HepG2 (cell line): ENCODE measurements at regions of chr4 and their contacts with region 1.

Region 1: DNA sequence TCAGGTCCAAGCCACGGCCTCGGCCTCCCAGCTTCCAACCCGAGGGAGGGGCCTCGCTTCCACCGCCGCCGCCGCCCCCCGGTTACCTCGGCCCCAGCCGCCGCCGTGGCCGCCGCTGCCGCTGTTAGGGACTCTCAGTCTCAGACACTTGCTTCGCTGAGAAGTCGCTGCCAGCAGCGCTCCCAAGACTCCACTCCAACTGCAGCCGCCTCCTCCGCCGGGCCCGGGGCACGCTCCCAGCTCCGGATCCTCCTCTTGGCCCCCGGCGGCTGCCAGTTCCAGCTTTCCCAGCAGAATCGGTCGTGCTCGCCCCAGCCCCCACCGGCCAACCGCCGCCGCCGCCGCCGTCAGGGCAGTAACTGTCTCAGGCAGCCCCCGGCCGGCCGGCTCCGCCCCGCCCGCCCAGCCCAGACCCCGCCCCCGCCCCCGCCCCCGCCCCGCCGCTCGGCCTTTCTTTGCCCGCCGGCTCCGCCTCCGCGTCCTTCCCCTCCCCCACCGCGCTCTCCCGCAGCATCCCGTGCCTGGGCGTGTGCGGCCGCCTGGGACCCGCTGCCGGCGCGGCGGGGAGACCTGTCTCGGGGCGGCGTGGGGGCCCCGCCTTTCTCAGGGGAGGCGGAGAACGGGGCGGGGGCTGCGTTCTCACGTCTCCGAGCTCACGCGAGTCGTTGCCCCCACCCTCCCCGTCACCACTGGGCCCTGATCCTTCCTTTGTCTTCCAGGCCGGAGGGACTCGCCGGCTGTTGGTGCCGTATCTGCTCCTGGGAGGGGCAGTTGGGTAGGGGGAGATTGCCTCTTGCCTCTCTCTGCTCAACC is at the start of gene ANKRD50:
- DNase-seq: peak; percentile 74
- ATAC-seq: peak; percentile 82
- H3K4me3 ChIP-seq: peak within 1 kb of the TSS; percentile 80 to 89 (median 85)
- H3K27ac ChIP-seq: peak within 1 kb of the TSS; percentile 87
- H3K4me1 ChIP-seq: peaks cover 36% of the 10 kb centered on the region
- H3K27me3 ChIP-seq: no peaks in the 10 kb centered on the region; a peak in 1 of 5 replicates
- CTCF ChIP-seq: no peak
- EP300 ChIP-seq: peak in 1 of 2 experiments; percentile 22; a peak in 1 of 4 replicates
- POLR2A ChIP-seq: peak; percentile 50 to 68; a peak in 3 of 4 replicates
- RAD21 ChIP-seq: no peak
- total RNA-seq, gene ANKRD50: 4.4 and 10.2 TPM in 2 replicates

Region 2: GRCh38 chr4:123976285-123976684 is 736.3 kb before region 1 on chr4:
- CTCF ChIA-PET with region 1: no interaction called
- POLR2A ChIA-PET with region 1: no interaction called
- in situ Hi-C with region 1: no loop called
- intact Hi-C with region 1: no loop called
- DNase-seq: no peak
- ATAC-seq: no peak
- H3K4me3 ChIP-seq: no peak overlapping the region
- H3K27ac ChIP-seq: no peak overlapping the region
- H3K4me1 ChIP-seq: peaks cover 19% of the 10 kb centered on the region
- H3K27me3 ChIP-seq: no peaks in the 10 kb centered on the region
- CTCF ChIP-seq: no peak
- EP300 ChIP-seq: no peak
- POLR2A ChIP-seq: no peak
- RAD21 ChIP-seq: no peak

Region 3: DNA sequence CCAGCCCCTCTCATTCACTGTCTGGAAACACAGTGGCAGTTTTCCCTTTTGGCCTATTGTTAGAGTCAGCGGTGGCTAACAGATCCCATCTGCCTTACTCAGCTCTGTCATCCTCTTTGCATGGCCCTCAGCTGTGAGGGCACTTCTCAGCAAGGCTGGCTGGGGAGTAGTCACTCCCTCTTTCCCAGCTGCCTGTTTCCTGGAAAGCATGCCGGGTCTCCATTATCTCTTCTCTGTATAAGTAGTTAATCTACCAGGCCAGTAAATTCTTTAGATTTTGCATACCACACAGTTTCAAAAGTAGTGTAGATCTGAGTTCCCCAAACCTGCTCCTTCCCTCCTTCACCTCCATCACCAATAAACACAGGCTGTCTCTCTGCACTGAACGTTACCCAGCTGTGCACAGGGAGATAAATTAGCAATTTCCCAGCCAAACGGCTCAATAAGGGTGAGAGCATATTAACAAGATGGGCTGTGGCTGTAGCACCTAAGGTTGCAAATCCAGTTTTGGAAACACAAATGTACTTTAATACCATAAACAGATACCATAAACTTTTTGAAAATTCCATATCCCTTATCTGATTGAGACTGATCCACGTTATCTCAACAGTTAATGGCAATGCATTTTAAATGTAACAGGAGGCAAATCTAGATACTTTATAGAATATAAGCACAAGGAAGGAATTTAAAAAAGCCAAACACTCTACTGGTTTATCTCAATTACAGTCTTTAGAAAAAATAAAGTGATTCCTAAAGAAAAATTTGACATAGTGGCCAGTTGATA is 229.3 kb before region 1 on chr4:
- CTCF ChIA-PET with region 1: no interaction called
- POLR2A ChIA-PET with region 1: no interaction called
- in situ Hi-C with region 1: no loop called
- intact Hi-C with region 1: loop called (anchors 2 kb)
- DNase-seq: no peak
- ATAC-seq: no peak
- H3K4me3 ChIP-seq: no peak overlapping the region
- H3K27ac ChIP-seq: no peak overlapping the region
- H3K4me1 ChIP-seq: no peaks in the 10 kb centered on the region; the same call in 1 of the 2 replicates
- H3K27me3 ChIP-seq: no peaks in the 10 kb centered on the region
- CTCF ChIP-seq: no peak
- EP300 ChIP-seq: no peak
- POLR2A ChIP-seq: no peak
- RAD21 ChIP-seq: no peak

Region 4: DNA sequence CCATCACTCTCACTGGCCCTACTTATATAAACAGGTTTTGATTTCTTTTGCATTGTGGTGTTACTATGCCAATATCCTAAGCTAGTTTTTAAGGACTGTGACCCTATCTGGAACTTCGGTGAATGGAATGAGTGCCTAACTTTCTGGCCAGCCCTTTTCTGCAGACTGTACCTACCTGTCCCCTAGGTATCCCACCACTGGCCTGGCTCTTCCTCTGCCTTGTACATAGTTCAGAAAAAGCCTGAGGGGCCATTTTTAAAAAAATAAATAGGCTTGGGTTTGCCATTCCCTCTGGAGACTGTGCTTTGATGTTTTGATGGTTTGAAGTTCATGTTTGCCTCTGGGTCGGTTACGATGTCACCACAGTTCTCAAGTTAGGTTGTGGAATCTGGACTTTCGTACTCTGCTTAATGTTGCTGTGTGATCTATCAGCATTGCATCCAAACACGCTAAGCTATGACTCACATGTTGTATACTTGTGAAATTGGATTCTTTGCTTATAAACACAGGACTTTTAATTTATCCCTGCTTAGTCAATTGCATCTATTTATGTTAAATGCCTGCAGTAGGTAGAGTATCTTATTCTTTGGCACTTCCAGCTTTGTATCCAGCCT is 182.0 kb before region 1 on chr4:
- CTCF ChIA-PET with region 1: no interaction called
- POLR2A ChIA-PET with region 1: interaction called, 12 read pairs
- in situ Hi-C with region 1: no loop called
- intact Hi-C with region 1: loop called (anchors 2 kb)
- DNase-seq: peak; percentile 99
- ATAC-seq: peak; percentile 95
- H3K4me3 ChIP-seq: peak overlapping the region in 1 of 3 experiments; percentile 34; a peak in 1 of 6 replicates
- H3K27ac ChIP-seq: peak overlapping the region; percentile 93
- H3K4me1 ChIP-seq: peaks cover 86% of the 10 kb centered on the region
- H3K27me3 ChIP-seq: no peaks in the 10 kb centered on the region
- CTCF ChIP-seq: no peak
- EP300 ChIP-seq: peak; percentile 88 to 99
- POLR2A ChIP-seq: peak in 1 of 2 experiments; percentile 65; a peak in 1 of 4 replicates
- RAD21 ChIP-seq: 0 out of 2 replicates have a peak, but pooled peaks have one; percentile 31

Region 5: GRCh38 chr4:124666496-124666895 is 46.1 kb before region 1 on chr4:
- CTCF ChIA-PET with region 1: no interaction called
- POLR2A ChIA-PET with region 1: no interaction called
- in situ Hi-C with region 1: no loop called
- intact Hi-C with region 1: loop called (anchors 5 kb)
- DNase-seq: peak; percentile 30
- ATAC-seq: peak; percentile 77
- H3K4me3 ChIP-seq: no peak overlapping the region
- H3K27ac ChIP-seq: no peak overlapping the region
- H3K4me1 ChIP-seq: peaks cover 14% of the 10 kb centered on the region
- H3K27me3 ChIP-seq: no peaks in the 10 kb centered on the region
- CTCF ChIP-seq: no peak
- EP300 ChIP-seq: no peak
- POLR2A ChIP-seq: no peak
- RAD21 ChIP-seq: no peak

Region 6: DNA sequence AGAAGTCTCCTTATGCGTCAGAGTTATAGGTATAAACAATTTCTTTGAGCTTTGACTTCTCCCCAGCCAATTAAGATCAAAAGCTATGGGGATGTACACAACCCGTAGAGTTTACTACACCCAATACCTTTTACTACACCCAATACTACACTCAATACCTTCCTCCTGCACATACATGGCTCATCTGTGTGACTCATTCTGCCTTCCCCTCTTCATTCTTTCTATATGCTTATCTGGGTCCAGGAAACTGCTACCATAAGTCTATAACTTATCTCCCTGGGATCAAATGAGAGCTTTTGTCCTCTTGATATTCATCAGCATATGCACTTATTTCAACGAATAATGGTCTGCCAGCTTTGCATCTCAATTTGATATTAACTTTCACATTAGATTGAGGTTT is 28.3 kb before region 1 on chr4:
- CTCF ChIA-PET with region 1: no interaction called
- POLR2A ChIA-PET with region 1: no interaction called
- in situ Hi-C with region 1: no loop called
- intact Hi-C with region 1: loop called (anchors 2 kb)
- DNase-seq: no peak
- ATAC-seq: no peak
- H3K4me3 ChIP-seq: no peak overlapping the region
- H3K27ac ChIP-seq: no peak overlapping the region
- H3K4me1 ChIP-seq: no peaks in the 10 kb centered on the region
- H3K27me3 ChIP-seq: no peaks in the 10 kb centered on the region
- CTCF ChIP-seq: no peak
- EP300 ChIP-seq: no peak
- POLR2A ChIP-seq: no peak
- RAD21 ChIP-seq: no peak

Region 7: GRCh38 chr4:124828382-124828781 is 115.8 kb after region 1 on chr4:
- CTCF ChIA-PET with region 1: no interaction called
- POLR2A ChIA-PET with region 1: no interaction called
- in situ Hi-C with region 1: no loop called
- intact Hi-C with region 1: no loop called
- DNase-seq: no peak
- ATAC-seq: no peak
- H3K4me3 ChIP-seq: no peak overlapping the region
- H3K27ac ChIP-seq: no peak overlapping the region
- H3K4me1 ChIP-seq: no peaks in the 10 kb centered on the region
- H3K27me3 ChIP-seq: no peaks in the 10 kb centered on the region; a peak in 1 of 5 replicates
- CTCF ChIP-seq: no peak
- EP300 ChIP-seq: no peak
- POLR2A ChIP-seq: no peak
- RAD21 ChIP-seq: no peak